Breast epithelium (tissue), 4 donors: ENCODE measurements at regions of chr5 and their contacts with region 1.

Region 1: GRCh38 chr5:114928644-114929462 is 240.9 kb downstream of the TRIM36 start:
- DNase-seq: no peak
- H3K4me3 ChIP-seq: no peak overlapping the region
- H3K27ac ChIP-seq: no peak overlapping the region
- H3K4me1 ChIP-seq: no peaks in the 10 kb centered on the region
- H3K27me3 ChIP-seq: no peaks in the 10 kb centered on the region
- CTCF ChIP-seq: no peak
- POLR2A ChIP-seq: no peak

Region 2: DNA sequence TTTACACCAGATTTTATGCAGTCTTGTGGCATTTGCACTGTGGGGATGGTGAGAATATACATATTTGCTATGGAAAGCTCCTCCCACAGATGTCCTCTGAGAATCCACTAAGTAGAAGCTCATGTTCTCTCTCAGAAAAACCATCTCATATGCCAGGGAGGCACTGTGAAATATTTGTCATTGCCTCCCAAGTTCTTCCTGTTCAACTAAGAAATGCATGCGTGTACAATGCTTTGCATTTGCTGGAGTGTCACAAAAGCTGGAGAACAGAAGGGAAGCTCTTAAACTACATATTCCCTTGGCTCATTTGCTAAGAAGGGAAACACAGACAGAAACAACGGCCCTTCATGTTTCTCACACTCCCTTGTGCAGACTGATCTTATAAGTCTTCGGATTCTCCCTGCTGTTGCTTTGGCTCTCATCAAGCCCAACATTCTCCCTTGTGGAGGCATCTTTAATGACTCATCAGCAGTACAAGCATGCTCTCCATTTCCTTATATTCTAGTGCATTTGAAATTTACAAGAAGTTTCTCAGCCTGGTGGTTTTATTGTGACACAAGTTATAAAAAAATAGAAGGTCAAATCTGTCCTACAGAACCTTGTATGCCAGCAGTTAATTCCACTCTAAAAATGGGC is 20.3 kb after region 1 on chr5:
- intact Hi-C with region 1: loop called (anchors 1 kb)
- DNase-seq: no peak
- H3K4me3 ChIP-seq: no peak overlapping the region
- H3K27ac ChIP-seq: no peak overlapping the region
- H3K4me1 ChIP-seq: no peaks in the 10 kb centered on the region
- H3K27me3 ChIP-seq: no peaks in the 10 kb centered on the region
- CTCF ChIP-seq: no peak
- POLR2A ChIP-seq: no peak